ENCODE measurements at regions of chr11 and their contacts with region 1.

Region 1: GRCh38 chr11:72793425-72794367 is at the start of gene STARD10:
- DNase-seq: peak; percentile 99
- ATAC-seq: peak; percentile 93
- total RNA-seq, gene STARD10: 102 TPM

Region 2: DNA sequence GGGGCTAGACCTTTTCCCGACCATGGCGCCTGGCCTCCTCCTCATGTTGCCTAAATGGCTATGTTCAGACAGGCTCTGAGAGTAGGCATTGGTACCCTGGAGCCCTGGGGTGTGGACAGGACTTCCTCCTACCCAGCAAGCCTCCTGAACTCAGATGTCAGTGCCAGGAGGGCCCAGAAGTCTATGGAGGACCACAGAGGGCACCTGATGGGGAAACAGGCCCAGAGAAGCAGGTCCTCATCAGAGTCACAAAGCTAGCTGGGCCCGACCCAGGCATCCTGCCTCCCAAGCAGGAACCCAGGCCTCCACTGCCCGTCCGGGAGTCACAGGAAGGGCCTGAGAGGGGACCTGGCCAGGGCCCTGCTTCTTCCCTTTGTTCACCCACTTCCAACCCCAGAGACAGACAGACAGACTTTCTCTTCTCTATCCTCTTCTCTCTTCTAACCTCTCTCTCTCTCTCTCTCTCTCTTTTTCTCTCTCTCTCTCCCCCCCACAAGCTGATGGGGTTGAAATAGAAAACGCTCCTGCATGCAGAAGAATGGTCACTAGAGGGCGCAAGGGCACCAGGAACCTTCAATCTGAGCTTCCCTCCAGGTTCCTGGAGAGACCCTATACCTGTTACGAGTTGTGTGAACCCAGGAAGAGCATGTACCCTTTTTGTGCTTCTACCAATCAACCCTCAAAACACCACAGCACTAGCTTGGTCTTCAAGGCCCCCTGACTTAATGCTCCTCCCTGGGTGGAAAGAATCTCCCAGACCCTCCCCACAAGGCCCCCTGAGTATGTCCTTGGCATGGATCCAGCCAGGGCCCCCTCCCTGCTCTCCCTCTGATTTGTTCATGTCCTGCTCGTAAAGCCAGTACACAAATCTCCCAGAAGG is 68.6 kb before region 1 on chr11:
- intact Hi-C with region 1: loop called (anchors 5 kb)
- DNase-seq: peak; percentile 66
- ATAC-seq: peak; percentile 5

Measured in left ventricle myocardium superior (tissue), 1 donor.